ENCODE measurements at regions of chr15 and their contacts with region 1.

Region 1: DNA sequence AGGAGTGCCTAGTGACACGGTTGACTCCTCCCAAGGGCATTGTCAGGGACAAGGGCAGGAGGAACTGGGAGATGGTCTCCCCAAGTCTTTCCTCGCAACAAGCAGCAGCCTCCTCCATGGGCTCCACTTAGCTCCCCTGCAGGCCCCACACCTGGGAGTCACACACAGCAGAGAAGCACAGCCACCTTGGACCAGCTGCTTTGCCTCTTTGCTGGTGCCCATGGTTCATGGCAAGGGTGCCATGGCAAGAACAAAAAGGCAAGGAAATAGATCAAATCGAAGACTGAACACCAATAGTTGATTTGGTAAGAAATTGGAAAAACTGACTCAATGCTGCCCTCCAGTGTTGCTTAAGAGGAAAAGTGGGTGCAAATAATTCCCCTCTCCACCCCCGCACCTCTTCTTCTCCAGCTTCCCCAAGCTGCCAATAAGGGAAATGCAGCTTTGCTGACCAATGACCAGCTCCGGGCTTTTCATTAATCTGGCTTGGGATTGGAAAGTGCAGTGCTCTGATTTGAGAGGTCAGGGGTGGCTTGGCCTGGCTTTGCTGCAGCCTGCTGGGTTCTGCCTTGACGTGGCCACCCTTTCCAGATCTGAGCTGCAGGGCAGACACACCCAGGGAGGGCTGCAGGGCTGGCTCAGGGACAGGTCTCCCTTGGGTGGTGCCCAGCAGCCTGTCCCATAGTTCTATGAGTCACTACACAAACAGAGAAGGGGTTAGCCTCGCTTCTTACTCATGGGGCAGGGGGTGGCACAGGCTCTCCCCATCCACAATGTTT is 162.0 kb downstream of the KLF13 start:
- DNase-seq: peak; percentile 83
- H3K4me3 ChIP-seq: no peak overlapping the region
- H3K27ac ChIP-seq: no peak overlapping the region
- H3K4me1 ChIP-seq: peaks cover 38% of the 10 kb centered on the region
- CTCF ChIP-seq: peak; percentile 96

Region 2: GRCh38 chr15:30791239-30792175 is 697.1 kb before region 1 on chr15:
- CTCF ChIA-PET with region 1: no interaction called
- POLR2A ChIA-PET with region 1: no interaction called
- intact Hi-C with region 1: loop called (anchors 10 kb)
- DNase-seq: peak; percentile 25
- H3K4me3 ChIP-seq: no peak overlapping the region
- H3K27ac ChIP-seq: no peak overlapping the region
- H3K4me1 ChIP-seq: no peaks in the 10 kb centered on the region
- CTCF ChIP-seq: no peak

Region 3: DNA sequence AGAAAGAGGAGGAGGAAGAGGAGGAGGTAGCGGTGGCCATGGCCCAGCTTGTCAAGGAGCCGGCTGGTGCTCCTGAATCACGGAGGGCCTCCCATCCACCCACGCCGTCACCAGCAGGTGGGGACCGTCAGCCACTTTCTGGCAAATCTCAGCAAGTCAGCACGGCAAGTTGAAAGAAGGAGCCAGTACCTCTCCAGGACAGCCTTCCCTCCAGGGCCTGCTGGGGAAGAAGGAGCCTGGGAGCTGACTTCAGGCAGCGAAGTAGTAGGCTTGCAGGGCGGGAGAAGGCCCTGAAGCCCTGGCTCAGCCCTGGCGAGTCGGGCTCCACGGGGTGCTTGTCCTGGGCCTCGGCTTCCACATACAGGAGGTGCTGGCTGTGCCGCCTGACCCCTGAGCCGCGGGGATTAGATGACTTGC is 287.9 kb before region 1 on chr15:
- CTCF ChIA-PET with region 1: no interaction called
- POLR2A ChIA-PET with region 1: no interaction called
- intact Hi-C with region 1: loop called (anchors 2 kb)
- DNase-seq: peak; percentile 75
- H3K4me3 ChIP-seq: no peak overlapping the region
- H3K27ac ChIP-seq: no peak overlapping the region
- H3K4me1 ChIP-seq: peaks cover 18% of the 10 kb centered on the region
- CTCF ChIP-seq: peak; percentile 78

Region 4: DNA sequence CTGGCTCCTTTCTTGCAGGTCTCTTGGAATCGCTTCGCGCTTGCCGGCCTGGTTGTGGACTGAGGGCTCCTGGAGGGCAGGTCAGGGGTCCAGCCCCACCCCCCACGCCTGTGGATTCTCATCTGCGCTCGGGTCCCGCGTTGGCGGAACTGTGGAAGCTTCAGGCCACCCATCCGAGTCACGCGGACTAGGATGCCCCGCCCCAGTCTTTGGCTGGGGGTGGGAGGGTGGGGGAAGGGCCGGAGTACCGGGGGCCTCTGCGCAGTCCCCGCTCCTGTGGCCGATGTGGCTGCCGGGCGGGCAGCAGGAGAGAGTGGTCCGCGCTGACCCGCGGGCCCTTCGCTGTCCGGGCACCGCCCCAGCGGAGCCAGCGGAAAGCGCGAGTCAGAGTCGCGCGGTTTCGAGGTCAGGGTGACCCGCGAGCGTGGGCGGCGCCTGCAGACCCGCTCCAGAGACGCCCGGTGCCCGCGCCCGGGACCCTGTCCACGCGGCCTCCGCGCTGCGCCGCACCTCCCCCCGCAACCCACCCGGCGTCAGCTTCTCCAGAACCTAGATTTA is 47.8 kb before region 1 on chr15:
- CTCF ChIA-PET with region 1: interaction called, 121 read pairs
- POLR2A ChIA-PET with region 1: interaction called, 33 read pairs
- intact Hi-C with region 1: loop called (anchors 1 kb)
- DNase-seq: no peak
- H3K4me3 ChIP-seq: peak overlapping the region; percentile 27
- H3K27ac ChIP-seq: no peak overlapping the region
- H3K4me1 ChIP-seq: peaks cover 97% of the 10 kb centered on the region
- CTCF ChIP-seq: no peak

Region 5: GRCh38 chr15:32733281-32733680 is 1244.7 kb after region 1 on chr15:
- CTCF ChIA-PET with region 1: no interaction called
- POLR2A ChIA-PET with region 1: no interaction called
- intact Hi-C with region 1: no loop called
- DNase-seq: no peak
- H3K4me3 ChIP-seq: no peak overlapping the region
- H3K27ac ChIP-seq: no peak overlapping the region
- H3K4me1 ChIP-seq: no peaks in the 10 kb centered on the region
- CTCF ChIP-seq: no peak